T-cell (primary cell): ENCODE measurements at regions of chr6 and their contacts with region 1.

Region 1: DNA sequence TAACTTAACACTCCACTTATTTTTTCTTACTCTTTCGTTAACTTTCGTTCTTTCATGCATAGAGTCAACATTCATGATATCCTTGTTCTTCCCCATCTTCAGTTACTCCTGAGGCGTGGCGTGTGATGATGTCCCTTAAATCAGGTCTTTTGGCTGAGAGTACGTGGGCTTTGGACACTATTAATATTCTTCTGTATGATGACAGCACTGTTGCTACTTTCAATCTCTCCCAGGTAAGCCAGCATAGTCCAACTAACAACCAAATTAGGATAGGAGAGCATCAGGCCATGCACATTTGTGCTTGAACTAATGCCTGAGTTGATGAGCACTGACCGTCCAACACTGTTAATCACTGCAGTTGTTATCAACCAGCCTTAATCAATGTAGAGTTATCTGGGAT is 119.6 kb downstream of the TMEM242 start:
- DNase-seq: no peak
- ATAC-seq: no peak
- H3K4me3 ChIP-seq: no peak overlapping the region
- H3K4me3 Mint-ChIP-seq: no peak overlapping the region
- H3K27ac ChIP-seq: no peak overlapping the region
- H3K27ac Mint-ChIP-seq: no peak overlapping the region
- H3K4me1 ChIP-seq: no peaks in the 10 kb centered on the region
- H3K4me1 Mint-ChIP-seq: no peaks in the 10 kb centered on the region
- H3K27me3 ChIP-seq: no peaks in the 10 kb centered on the region
- H3K27me3 Mint-ChIP-seq: no peaks in the 10 kb centered on the region

Region 2: GRCh38 chr6:157227202-157228166 is 23.7 kb after region 1 on chr6:
- CTCF ChIA-PET with region 1: no interaction called
- POLR2A ChIA-PET with region 1: interaction called in 1 of 2 experiments, 10 read pairs
- DNase-seq: peak in 17 of 35 experiments; percentile 14 to 46 (median 30)
- ATAC-seq: peak; percentile 68 to 85 (median 80)
- H3K4me3 ChIP-seq: peak overlapping the region in 1 of 2 donors; percentile 11
- H3K4me3 Mint-ChIP-seq: peak overlapping the region in 1 of 3 donors; percentile 62
- H3K27ac ChIP-seq: no peak overlapping the region
- H3K27ac Mint-ChIP-seq: peak overlapping the region; percentile 68 to 77
- H3K4me1 ChIP-seq: peaks cover 26 to 39% of the 10 kb centered on the region in 2 experiments
- H3K4me1 Mint-ChIP-seq: peaks cover 37 to 54% (median 46%) of the 10 kb centered on the region in 3 donors
- H3K27me3 ChIP-seq: peaks cover 0 to 24% of the 10 kb centered on the region in 2 experiments
- H3K27me3 Mint-ChIP-seq: peaks cover 0 to 6% of the 10 kb centered on the region in 2 donors